ENCODE measurements at regions of chr7 and their contacts with region 1.

Region 1: DNA sequence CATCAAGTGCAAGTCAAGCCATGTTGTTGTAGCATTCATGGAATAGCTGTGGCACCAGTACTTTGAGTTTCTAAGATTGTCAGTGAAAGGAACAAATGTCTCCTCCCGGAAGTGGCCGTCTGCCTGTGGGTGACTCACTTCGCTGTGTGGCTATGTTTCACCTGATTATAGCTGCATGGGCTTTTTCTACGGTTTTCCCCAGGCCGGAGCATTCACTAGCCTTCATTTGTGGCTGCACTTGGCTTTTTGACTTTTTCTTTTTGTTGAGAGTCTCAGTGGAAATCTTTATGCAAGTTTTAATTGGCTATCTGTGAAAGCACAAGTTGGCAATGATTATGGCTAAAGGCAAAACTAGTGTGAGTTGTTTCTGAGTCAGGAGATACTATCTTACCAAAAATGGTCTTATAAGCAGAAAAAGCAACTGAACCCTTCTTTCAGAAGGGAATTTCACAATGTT is 35.0 kb downstream of the SRI start:
- DNase-seq: peak; percentile 58
- ATAC-seq: peak; percentile 98
- H3K4me3 ChIP-seq: no peak overlapping the region
- H3K27ac ChIP-seq: peak overlapping the region; percentile 47
- H3K4me1 ChIP-seq: peaks cover 5% of the 10 kb centered on the region; the same call in 1 of the 2 replicates
- H3K27me3 ChIP-seq: no peaks in the 10 kb centered on the region
- CTCF ChIP-seq: no peak
- EP300 ChIP-seq: peak in 1 of 2 experiments; percentile 39; a peak in 1 of 4 replicates
- POLR2A ChIP-seq: no peak
- RAD21 ChIP-seq: no peak

Region 2: DNA sequence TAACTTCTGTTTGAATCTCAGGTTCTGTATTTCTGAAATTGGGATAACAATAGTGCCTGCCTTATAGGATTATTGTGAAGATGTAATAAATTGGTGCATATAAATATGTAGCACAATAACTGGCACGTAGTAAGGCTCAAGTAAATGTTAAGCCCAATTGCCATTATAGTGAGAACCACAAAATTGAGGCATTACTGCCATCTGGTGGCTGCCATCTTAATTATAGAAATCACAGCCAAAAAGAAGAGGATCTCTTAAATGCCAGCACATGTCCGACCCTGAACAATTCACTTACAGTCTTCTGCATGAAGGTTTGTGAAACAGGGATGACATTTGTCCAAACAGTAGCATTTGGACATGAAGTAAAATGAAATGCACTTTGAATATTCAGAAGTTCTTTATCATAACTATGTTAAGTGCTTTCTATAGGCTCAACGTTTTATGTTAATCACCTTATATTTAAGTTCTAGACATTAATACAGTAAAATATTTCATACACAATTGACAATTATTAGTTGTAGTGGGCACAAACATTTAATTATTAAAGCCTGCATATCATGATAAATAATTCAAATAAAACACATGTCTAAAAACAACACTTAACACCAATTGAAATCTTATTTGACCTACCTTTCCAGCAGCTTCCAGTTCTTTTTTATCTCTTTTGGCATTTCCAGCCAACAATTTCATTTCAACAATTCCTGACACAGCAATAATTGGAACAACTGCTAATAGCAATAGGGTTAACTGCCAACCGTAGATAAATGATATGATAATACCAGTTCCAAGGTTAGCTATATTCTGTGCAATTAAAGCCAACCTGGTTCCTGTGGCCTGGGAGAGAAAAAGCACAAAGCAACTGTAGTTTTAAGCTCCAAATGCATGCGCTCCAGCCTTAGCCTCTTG is 767.9 kb before region 1 on chr7:
- CTCF ChIA-PET with region 1: no interaction called
- POLR2A ChIA-PET with region 1: no interaction called
- RAD21 ChIA-PET with region 1: no interaction called
- SMC1A ChIA-PET with region 1: no interaction called
- in situ Hi-C with region 1: no loop called
- intact Hi-C with region 1: no loop called
- DNase-seq: peak; percentile 44
- ATAC-seq: peak; percentile 96
- H3K4me3 ChIP-seq: no peak overlapping the region
- H3K27ac ChIP-seq: no peak overlapping the region
- H3K4me1 ChIP-seq: no peaks in the 10 kb centered on the region
- H3K27me3 ChIP-seq: no peaks in the 10 kb centered on the region
- CTCF ChIP-seq: peak; percentile 55 to 82 (median 61)
- EP300 ChIP-seq: no peak
- POLR2A ChIP-seq: no peak
- RAD21 ChIP-seq: peak; percentile 90

Region 3: GRCh38 chr7:88200789-88201188 is 15.9 kb after region 1 on chr7:
- CTCF ChIA-PET with region 1: interaction called, 18 read pairs
- POLR2A ChIA-PET with region 1: interaction called, 3 read pairs
- RAD21 ChIA-PET with region 1: interaction called, 5 read pairs
- SMC1A ChIA-PET with region 1: interaction called, 11 read pairs
- in situ Hi-C with region 1: no loop called
- intact Hi-C with region 1: no loop called
- DNase-seq: no peak
- ATAC-seq: no peak
- H3K4me3 ChIP-seq: no peak overlapping the region
- H3K27ac ChIP-seq: no peak overlapping the region
- H3K4me1 ChIP-seq: peaks cover 3% of the 10 kb centered on the region; the same call in 1 of the 2 replicates
- H3K27me3 ChIP-seq: no peaks in the 10 kb centered on the region
- CTCF ChIP-seq: no peak
- EP300 ChIP-seq: no peak
- POLR2A ChIP-seq: no peak
- RAD21 ChIP-seq: no peak

Region 4: GRCh38 chr7:88208521-88208920 is 23.6 kb after region 1 on chr7:
- CTCF ChIA-PET with region 1: interaction called, 18 read pairs
- POLR2A ChIA-PET with region 1: interaction called, 15 read pairs
- RAD21 ChIA-PET with region 1: interaction called, 5 read pairs
- SMC1A ChIA-PET with region 1: interaction called, 19 read pairs
- in situ Hi-C with region 1: no loop called
- intact Hi-C with region 1: no loop called
- DNase-seq: no peak
- ATAC-seq: no peak
- H3K4me3 ChIP-seq: no peak overlapping the region
- H3K27ac ChIP-seq: no peak overlapping the region
- H3K4me1 ChIP-seq: no peaks in the 10 kb centered on the region
- H3K27me3 ChIP-seq: no peaks in the 10 kb centered on the region
- CTCF ChIP-seq: no peak
- EP300 ChIP-seq: no peak
- POLR2A ChIP-seq: no peak
- RAD21 ChIP-seq: no peak

Measured in GM12878 (cell line).